ENCODE measurements at regions of chr3 and their contacts with region 1.

Region 1: DNA sequence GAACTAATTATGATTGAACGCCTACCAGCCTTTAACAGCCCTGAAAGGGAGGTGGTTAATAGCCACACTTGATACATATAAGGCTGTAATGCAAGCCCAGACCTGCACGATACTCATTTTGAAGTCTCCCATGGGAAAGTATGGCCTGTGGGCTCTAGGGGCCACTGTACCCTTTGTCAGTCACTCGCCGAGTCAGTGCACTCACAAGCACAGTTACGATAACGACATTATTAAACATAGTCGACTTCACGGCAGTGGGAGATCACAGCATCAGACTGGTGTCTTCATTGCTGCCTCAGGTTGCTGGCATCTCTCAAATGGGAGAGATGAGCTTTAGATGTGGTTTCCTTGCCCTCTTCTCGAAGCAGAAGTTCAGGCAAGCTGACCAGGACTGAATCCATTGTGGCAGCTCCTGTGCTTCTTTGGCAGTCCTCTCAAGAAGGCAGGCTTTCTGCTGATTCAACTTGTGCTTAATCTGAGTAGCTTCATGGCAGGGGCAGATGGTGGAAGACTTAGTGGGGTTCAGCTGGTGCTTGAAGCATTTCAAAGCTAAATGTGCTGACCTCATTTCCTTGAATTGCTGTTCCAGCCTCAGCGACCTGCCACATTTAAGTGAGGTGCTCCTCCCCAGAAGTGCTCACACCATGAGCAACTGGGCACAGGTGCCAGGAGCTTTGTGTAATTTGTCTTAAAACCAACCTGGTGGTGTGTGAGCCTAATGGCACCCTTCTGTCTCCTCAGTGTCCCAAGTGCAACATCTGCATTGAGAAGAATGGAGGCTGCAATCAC is 15.8 kb upstream of the P4HTM start:
- DNase-seq: no peak
- H3K4me3 ChIP-seq: no peak overlapping the region
- H3K27ac ChIP-seq: no peak overlapping the region
- H3K4me1 ChIP-seq: no peaks in the 10 kb centered on the region
- H3K27me3 ChIP-seq: no peaks in the 10 kb centered on the region
- CTCF ChIP-seq: no peak
- EP300 ChIP-seq: no peak
- POLR2A ChIP-seq: no peak
- RAD21 ChIP-seq: no peak

Region 2: DNA sequence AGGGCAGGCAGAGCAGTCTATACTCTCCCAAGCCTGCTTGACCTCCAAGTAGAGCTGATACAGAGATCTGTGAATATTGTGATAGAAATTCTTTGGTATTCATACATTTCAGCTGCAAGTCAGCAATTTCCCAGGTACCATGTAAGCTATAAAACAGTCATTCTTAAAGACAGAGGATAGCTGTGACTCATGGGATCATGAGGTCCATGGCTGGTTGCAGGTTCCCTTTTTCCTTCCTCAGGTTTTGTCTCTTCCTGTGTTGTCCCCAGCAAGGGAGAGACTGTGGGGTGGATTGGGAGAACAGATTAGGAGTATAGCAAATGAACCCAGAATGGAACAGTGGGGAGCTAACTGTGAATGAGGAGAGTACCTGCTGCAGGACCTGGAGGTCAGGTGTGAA is 10.4 kb after region 1 on chr3:
- CTCF ChIA-PET with region 1: interaction called, 22 read pairs
- POLR2A ChIA-PET with region 1: interaction called, 13 read pairs
- DNase-seq: no peak
- H3K4me3 ChIP-seq: no peak overlapping the region
- H3K27ac ChIP-seq: no peak overlapping the region
- H3K4me1 ChIP-seq: peaks cover 0 to 7% (median 6%) of the 10 kb centered on the region in 4 experiments; a peak in 3 of 7 replicates
- H3K27me3 ChIP-seq: no peaks in the 10 kb centered on the region
- CTCF ChIP-seq: no peak
- EP300 ChIP-seq: no peak
- POLR2A ChIP-seq: no peak
- RAD21 ChIP-seq: no peak

Region 3: DNA sequence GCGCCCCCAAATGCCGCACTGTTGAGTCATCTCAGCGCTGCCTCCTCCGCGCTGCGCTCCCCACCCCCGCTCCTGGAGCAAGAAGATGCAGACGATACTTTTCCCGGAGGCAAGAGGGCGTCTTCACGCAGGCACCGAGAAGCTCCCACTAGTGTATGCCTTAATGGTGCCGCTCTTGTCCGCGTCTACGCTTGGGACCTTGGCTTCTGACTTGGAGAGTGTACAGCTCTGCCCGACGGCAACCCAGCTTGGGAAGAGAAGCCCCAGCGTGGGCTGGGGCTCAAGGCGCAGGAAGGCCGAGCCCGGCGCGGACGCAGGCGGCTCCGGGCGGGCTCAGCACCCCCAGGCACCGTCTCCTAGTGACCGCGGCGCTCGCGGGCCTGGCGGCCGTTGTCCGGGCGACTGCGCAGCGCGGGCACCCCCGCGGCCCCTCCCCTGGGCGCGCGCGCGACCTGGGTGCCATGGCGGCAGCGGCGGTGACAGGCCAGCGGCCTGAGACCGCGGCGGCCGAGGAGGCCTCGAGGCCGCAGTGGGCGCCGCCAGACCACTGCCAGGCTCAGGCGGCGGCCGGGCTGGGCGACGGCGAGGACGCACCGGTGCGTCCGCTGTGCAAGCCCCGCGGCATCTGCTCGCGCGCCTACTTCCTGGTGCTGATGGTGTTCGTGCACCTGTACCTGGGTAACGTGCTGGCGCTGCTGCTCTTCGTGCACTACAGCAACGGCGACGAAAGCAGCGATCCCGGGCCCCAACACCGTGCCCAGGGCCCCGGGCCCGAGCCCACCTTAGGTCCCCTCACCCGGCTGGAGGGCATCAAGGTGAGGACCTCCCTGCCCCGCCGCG is 15.7 kb after region 1 on chr3 and contains the start of gene P4HTM:
- CTCF ChIA-PET with region 1: interaction called, 22 read pairs
- POLR2A ChIA-PET with region 1: interaction called, 13 read pairs
- DNase-seq: peak; percentile 63 to 84
- H3K4me3 ChIP-seq: peak within 1 kb of the TSS; percentile 66 to 83 (median 76)
- H3K27ac ChIP-seq: peak within 1 kb of the TSS; percentile 87
- H3K4me1 ChIP-seq: peaks cover 7 to 17% (median 10%) of the 10 kb centered on the region in 4 experiments; a peak in 5 of 7 replicates
- H3K27me3 ChIP-seq: no peaks in the 10 kb centered on the region
- CTCF ChIP-seq: peak in 1 of 3 experiments; percentile 40; a peak in 2 of 4 replicates
- EP300 ChIP-seq: no peak
- POLR2A ChIP-seq: peak in 1 of 2 experiments; percentile 64; a peak in 1 of 3 replicates
- RAD21 ChIP-seq: no peak
- total RNA-seq, gene P4HTM: 18.6 and 19.1 TPM in 2 replicates

Measured in H1 (cell line).